ENCODE measurements at regions of chr10 and their contacts with region 1.

Region 1: GRCh38 chr10:112314822-112315474 is 31.7 kb downstream of the TECTB start:
- DNase-seq: peak; percentile 76
- ATAC-seq: peak; percentile 95
- H3K4me3 ChIP-seq: no peak overlapping the region
- H3K27ac ChIP-seq: no peak overlapping the region
- H3K4me1 ChIP-seq: peaks cover 4% of the 10 kb centered on the region; the same call in 1 of the 2 replicates
- H3K27me3 ChIP-seq: no peaks in the 10 kb centered on the region
- CTCF ChIP-seq: peak; percentile 83

Region 2: GRCh38 chr10:112115799-112116385 is 199.1 kb before region 1 on chr10:
- CTCF ChIA-PET with region 1: no interaction called
- POLR2A ChIA-PET with region 1: no interaction called
- intact Hi-C with region 1: loop called (anchors 2 kb)
- DNase-seq: peak; percentile 53
- ATAC-seq: peak; percentile 74
- H3K4me3 ChIP-seq: no peak overlapping the region
- H3K27ac ChIP-seq: no peak overlapping the region
- H3K4me1 ChIP-seq: no peaks in the 10 kb centered on the region
- H3K27me3 ChIP-seq: no peaks in the 10 kb centered on the region
- CTCF ChIP-seq: peak; percentile 69

Region 3: DNA sequence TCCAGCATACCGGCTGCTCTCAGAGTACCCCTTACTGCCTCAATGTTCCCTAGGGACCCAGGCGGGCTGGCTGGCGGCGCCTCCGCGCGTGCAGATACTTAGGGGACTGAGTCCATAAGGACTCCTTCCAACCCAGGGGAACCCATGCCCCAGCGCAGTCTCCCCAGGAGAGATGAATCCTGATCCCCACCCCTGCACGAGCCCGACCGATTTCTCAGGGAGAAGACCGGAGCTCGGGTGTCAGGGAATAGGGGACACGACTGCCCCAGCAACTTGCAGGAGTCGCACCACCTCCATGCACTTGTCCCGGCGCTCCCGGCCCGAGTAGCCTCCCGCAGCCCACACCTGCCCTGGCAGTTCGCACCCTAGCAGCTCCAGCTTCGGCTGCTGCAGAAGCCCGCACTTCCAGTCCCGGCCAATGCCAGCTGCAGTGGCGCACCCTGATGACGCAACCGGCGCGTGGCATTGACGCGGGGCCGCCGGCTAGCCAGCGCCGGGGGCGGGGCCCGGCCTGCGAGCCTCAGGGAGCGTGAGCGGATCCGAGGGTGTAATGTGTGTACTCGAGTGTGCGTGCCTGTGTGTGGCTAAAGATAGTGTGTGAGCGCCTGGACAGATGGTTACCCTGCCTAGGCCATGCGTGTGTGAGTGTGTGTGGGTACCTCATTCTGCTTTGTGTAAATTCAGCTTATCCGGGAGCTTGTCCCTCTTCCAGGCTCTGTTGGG is 131.5 kb before region 1 on chr10 and contains the start of gene GPAM:
- CTCF ChIA-PET with region 1: no interaction called
- POLR2A ChIA-PET with region 1: no interaction called
- intact Hi-C with region 1: loop called (anchors 5 kb)
- DNase-seq: peak; percentile 91
- ATAC-seq: peak; percentile 93
- H3K4me3 ChIP-seq: peak within 1 kb of the TSS; percentile 91
- H3K27ac ChIP-seq: peak within 1 kb of the TSS; percentile 5; the same call in 1 of the 2 replicates
- H3K4me1 ChIP-seq: peaks cover 5% of the 10 kb centered on the region; the same call in 1 of the 2 replicates
- H3K27me3 ChIP-seq: no peaks in the 10 kb centered on the region
- CTCF ChIP-seq: no peak
- total RNA-seq, gene GPAM: 5.4 and 6.2 TPM in 2 replicates

Region 4: DNA sequence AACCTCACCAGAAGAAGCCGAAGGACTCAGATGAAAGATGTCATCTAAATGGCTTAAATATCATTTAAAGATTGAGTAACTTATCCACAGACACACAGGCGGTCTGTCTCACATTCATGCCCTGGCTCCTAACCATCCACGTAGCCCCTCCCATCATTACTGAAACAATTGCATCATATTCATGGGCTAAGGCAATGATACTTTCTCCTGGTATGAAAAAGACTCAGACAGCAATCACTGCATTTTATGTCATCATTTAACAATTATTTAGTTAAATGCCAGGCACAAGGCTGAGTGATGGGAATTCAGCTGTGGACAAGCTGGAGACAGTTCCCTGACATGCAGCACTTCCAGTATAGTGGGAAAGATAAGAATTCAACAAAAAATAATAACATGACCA is 43.0 kb before region 1 on chr10:
- CTCF ChIA-PET with region 1: no interaction called
- POLR2A ChIA-PET with region 1: no interaction called
- intact Hi-C with region 1: no loop called
- DNase-seq: no peak
- ATAC-seq: no peak
- H3K4me3 ChIP-seq: no peak overlapping the region
- H3K27ac ChIP-seq: no peak overlapping the region
- H3K4me1 ChIP-seq: no peaks in the 10 kb centered on the region
- H3K27me3 ChIP-seq: no peaks in the 10 kb centered on the region
- CTCF ChIP-seq: no peak

Region 5: DNA sequence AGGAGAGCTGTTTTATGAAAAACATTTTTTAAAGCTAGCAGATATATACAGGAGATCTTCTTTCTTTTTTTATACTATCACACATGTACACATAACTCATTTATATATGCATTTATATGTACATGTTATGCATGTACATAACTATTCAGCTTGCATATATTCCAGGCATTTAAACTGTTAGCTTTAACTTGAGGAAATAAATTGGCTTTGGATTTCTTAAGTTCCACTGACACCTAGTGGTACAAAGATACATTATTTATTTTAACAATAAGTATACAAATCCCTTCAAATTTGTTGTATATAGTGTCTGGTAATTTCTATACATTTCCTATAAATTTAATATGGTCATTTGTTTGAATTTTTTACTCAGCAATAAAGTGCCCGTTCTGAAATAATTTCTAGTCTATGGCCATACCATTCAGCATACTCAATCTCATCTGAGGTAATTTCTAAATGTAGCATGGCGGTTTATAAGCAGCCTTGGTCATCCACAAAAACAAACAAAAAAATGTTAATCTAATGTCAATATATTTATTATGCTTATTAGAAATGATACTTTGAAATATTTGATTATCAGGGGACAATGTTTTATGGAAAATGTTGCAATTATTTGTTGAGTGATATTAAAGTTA is 120.2 kb after region 1 on chr10:
- CTCF ChIA-PET with region 1: no interaction called
- POLR2A ChIA-PET with region 1: no interaction called
- intact Hi-C with region 1: loop called (anchors 2 kb)
- DNase-seq: peak; percentile 60
- ATAC-seq: no peak
- H3K4me3 ChIP-seq: no peak overlapping the region
- H3K27ac ChIP-seq: no peak overlapping the region
- H3K4me1 ChIP-seq: no peaks in the 10 kb centered on the region
- H3K27me3 ChIP-seq: no peaks in the 10 kb centered on the region
- CTCF ChIP-seq: peak; percentile 68

Region 6: GRCh38 chr10:112517381-112517976 is 202.5 kb after region 1 on chr10:
- CTCF ChIA-PET with region 1: no interaction called
- POLR2A ChIA-PET with region 1: no interaction called
- intact Hi-C with region 1: no loop called
- DNase-seq: peak; percentile 62
- ATAC-seq: peak; percentile 48; the same call in 1 of the 2 replicates
- H3K4me3 ChIP-seq: no peak overlapping the region
- H3K27ac ChIP-seq: no peak overlapping the region
- H3K4me1 ChIP-seq: peaks cover 18% of the 10 kb centered on the region
- H3K27me3 ChIP-seq: no peaks in the 10 kb centered on the region
- CTCF ChIP-seq: no peak